Naive thymus-derived CD4-positive, alpha-beta T cell (primary cell): ENCODE measurements at regions of chr13 and their contacts with region 1.

Region 1: DNA sequence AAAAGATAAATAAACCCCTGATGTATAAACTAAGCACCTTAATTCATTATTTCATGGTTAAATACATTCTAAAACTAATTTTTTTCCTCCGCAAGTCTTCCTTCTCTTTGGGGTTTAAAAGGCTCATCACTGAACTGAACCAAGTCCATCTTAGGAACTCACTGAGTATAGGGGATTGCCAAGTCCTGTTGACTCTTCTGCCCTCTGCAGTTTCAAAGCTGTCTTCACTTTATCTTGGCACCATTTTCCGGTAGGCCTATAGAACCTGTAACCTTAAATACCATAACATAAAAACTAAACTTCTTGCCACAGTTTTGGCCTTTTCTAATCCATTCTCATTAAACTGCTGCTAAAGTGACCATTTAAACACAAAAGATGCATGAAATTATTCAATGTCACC is 66.5 kb upstream of the USPL1 start:
- DNase-seq: peak in 7 of 9 donors; percentile 22 to 63 (median 44)
- ATAC-seq: peak; percentile 82
- H3K4me3 ChIP-seq: no peak overlapping the region
- H3K4me3 Mint-ChIP-seq: no peak overlapping the region
- H3K27ac ChIP-seq: no peak overlapping the region
- H3K27ac Mint-ChIP-seq: peak overlapping the region in 1 of 9 donors; percentile 26
- H3K4me1 ChIP-seq: no peaks in the 10 kb centered on the region
- H3K4me1 Mint-ChIP-seq: peaks cover 0 to 6% (median 2%) of the 10 kb centered on the region in 7 donors
- H3K27me3 ChIP-seq: no peaks in the 10 kb centered on the region
- H3K27me3 Mint-ChIP-seq: peaks cover 0 to 11% (median 0%) of the 10 kb centered on the region in 5 donors

Region 2: GRCh38 chr13:29508130-29508875 is 1042.9 kb before region 1 on chr13:
- CTCF ChIA-PET with region 1: no interaction called
- POLR2A ChIA-PET with region 1: no interaction called
- intact Hi-C with region 1: loop called in 1 of 2 experiments (anchors 2 kb)
- DNase-seq: peak; percentile 32 to 74 (median 61)
- ATAC-seq: peak; percentile 76
- H3K4me3 ChIP-seq: no peak overlapping the region
- H3K4me3 Mint-ChIP-seq: no peak overlapping the region
- H3K27ac ChIP-seq: no peak overlapping the region
- H3K27ac Mint-ChIP-seq: peak overlapping the region in 1 of 9 donors; percentile 21
- H3K4me1 ChIP-seq: no peaks in the 10 kb centered on the region
- H3K4me1 Mint-ChIP-seq: peaks cover 0 to 2% (median under 1%) of the 10 kb centered on the region in 7 donors
- H3K27me3 ChIP-seq: no peaks in the 10 kb centered on the region
- H3K27me3 Mint-ChIP-seq: peaks cover 3 to 6% (median 5%) of the 10 kb centered on the region in 5 donors

Region 3: DNA sequence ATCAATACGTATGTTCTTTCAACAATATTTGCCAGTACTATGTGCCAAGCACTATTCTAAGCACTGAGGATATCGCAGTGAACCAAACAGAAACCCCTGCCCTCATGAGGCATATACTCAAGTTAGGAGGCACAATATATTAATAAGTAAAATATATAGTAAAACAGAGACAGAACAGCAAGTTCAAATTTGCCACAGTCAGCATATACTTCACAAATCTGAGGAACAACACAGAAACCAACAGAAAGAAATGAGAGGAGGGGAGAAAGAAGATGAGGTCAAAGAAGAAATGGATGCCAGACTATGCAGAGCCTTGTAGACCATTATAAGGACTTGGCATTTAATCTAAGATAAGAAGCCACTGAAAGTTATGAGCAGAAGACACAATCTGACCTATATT is 303.8 kb before region 1 on chr13:
- CTCF ChIA-PET with region 1: no interaction called
- POLR2A ChIA-PET with region 1: no interaction called
- intact Hi-C with region 1: no loop called
- DNase-seq: no peak
- ATAC-seq: no peak
- H3K4me3 ChIP-seq: no peak overlapping the region
- H3K4me3 Mint-ChIP-seq: no peak overlapping the region
- H3K27ac ChIP-seq: no peak overlapping the region
- H3K27ac Mint-ChIP-seq: no peak overlapping the region
- H3K4me1 ChIP-seq: no peaks in the 10 kb centered on the region
- H3K4me1 Mint-ChIP-seq: peaks cover 0 to 3% (median 0%) of the 10 kb centered on the region in 7 donors
- H3K27me3 ChIP-seq: no peaks in the 10 kb centered on the region
- H3K27me3 Mint-ChIP-seq: no peaks in the 10 kb centered on the region

Region 4: GRCh38 chr13:30257468-30258099 is 293.6 kb before region 1 on chr13:
- CTCF ChIA-PET with region 1: no interaction called
- POLR2A ChIA-PET with region 1: no interaction called
- intact Hi-C with region 1: loop called in 1 of 2 experiments (anchors 1 kb)
- DNase-seq: no peak
- ATAC-seq: no peak
- H3K4me3 ChIP-seq: no peak overlapping the region
- H3K4me3 Mint-ChIP-seq: no peak overlapping the region
- H3K27ac ChIP-seq: no peak overlapping the region
- H3K27ac Mint-ChIP-seq: peak overlapping the region in 2 of 9 donors; percentile 18 to 62
- H3K4me1 ChIP-seq: no peaks in the 10 kb centered on the region
- H3K4me1 Mint-ChIP-seq: peaks cover 0 to 21% (median 14%) of the 10 kb centered on the region in 7 donors
- H3K27me3 ChIP-seq: no peaks in the 10 kb centered on the region
- H3K27me3 Mint-ChIP-seq: no peaks in the 10 kb centered on the region

Region 5: GRCh38 chr13:30355384-30355699 is 195.8 kb before region 1 on chr13:
- CTCF ChIA-PET with region 1: no interaction called
- POLR2A ChIA-PET with region 1: no interaction called
- intact Hi-C with region 1: loop called in 1 of 2 experiments (anchors 1 kb)
- DNase-seq: peak in 3 of 9 donors; percentile 26 to 40 (median 28)
- ATAC-seq: peak; percentile 84
- H3K4me3 ChIP-seq: no peak overlapping the region
- H3K4me3 Mint-ChIP-seq: peak overlapping the region in 7 of 10 donors; percentile 14 to 61 (median 32)
- H3K27ac ChIP-seq: no peak overlapping the region
- H3K27ac Mint-ChIP-seq: peak overlapping the region in 3 of 9 donors; percentile 8 to 75 (median 39)
- H3K4me1 ChIP-seq: peaks cover 0 to 4% of the 10 kb centered on the region in 2 donors
- H3K4me1 Mint-ChIP-seq: peaks cover 10 to 40% (median 35%) of the 10 kb centered on the region in 7 donors
- H3K27me3 ChIP-seq: no peaks in the 10 kb centered on the region
- H3K27me3 Mint-ChIP-seq: no peaks in the 10 kb centered on the region

Region 6: DNA sequence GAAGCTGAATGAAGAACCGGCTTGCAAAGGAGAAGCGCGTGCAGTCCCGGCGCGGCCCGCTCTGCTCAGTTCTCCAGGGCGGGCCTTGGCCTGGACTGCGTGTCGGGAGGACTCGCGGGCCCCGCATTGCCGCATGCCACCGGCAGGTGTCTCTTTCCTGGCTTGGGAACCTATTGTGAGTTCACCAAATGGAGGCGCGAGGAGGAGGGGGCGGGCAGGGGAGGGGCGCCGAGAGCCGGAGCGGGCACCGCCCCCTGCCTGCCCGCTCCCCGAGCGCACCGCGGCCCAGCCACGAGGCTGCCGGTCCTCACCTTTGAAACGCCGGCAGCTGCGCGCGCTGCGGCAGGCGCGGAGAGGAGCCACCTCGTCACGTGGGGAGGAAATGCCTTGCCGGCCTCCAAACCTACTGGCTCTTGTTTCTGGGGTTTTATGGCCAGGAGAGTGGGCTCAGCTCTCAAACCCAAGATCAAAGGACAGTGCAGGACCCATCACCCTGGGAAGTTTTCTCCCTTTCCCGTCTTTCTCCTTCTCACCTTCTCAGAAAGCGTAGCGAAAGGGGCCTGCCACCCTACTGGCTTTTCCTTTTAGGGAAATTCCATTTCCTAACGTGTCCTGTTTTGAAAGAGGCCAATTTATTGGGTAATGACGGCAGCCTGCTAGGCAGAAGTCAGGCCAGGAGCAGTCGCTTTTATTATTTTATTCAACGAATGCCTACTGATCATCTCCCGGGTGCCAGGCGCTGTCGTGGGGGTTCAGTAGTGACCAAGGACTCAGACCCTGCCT is 142.7 kb before region 1 on chr13:
- CTCF ChIA-PET with region 1: no interaction called
- POLR2A ChIA-PET with region 1: no interaction called
- intact Hi-C with region 1: loop called in 1 of 2 experiments (anchors 1 kb)
- DNase-seq: peak; percentile 78 to 89 (median 85)
- ATAC-seq: peak; percentile 97
- H3K4me3 ChIP-seq: peak overlapping the region; percentile 44
- H3K4me3 Mint-ChIP-seq: peak overlapping the region; percentile 64 to 78 (median 72)
- H3K27ac ChIP-seq: peak overlapping the region; percentile 52
- H3K27ac Mint-ChIP-seq: peak overlapping the region; percentile 51 to 87 (median 83)
- H3K4me1 ChIP-seq: peaks cover 9 to 14% of the 10 kb centered on the region in 2 donors
- H3K4me1 Mint-ChIP-seq: peaks cover 6 to 46% (median 37%) of the 10 kb centered on the region in 7 donors
- H3K27me3 ChIP-seq: no peaks in the 10 kb centered on the region
- H3K27me3 Mint-ChIP-seq: peaks cover 0 to 12% (median 0%) of the 10 kb centered on the region in 5 donors

Region 7: DNA sequence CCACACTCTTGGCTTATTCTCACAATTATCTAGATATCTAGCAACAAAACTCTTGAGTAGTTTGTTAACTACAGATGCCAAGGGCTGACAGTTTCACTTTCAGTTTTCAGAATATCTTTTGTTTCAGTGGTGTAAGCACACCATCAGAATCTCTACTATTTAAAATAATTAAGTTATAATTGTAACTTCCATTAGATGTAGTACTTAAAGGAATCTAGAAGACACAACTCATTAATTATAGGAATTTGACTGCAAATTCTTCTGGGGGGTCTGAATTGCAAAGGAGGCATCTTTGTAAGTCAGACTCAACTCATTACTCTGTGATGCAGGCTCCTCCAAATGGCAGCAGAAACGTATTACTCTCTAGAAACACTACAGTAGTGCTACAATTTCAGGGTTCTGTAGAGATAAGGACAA is 21.7 kb after region 1 on chr13:
- CTCF ChIA-PET with region 1: no interaction called
- POLR2A ChIA-PET with region 1: no interaction called
- intact Hi-C with region 1: loop called in 1 of 2 experiments (anchors 2 kb)
- DNase-seq: peak in 7 of 9 donors; percentile 19 to 65 (median 49)
- ATAC-seq: peak; percentile 69
- H3K4me3 ChIP-seq: peak overlapping the region; percentile 55
- H3K4me3 Mint-ChIP-seq: peak overlapping the region; percentile 66 to 88 (median 81)
- H3K27ac ChIP-seq: peak overlapping the region; percentile 81
- H3K27ac Mint-ChIP-seq: peak overlapping the region; percentile 88 to 97 (median 94)
- H3K4me1 ChIP-seq: peaks cover 13 to 24% of the 10 kb centered on the region in 2 donors
- H3K4me1 Mint-ChIP-seq: peaks cover 14 to 42% (median 36%) of the 10 kb centered on the region in 7 donors
- H3K27me3 ChIP-seq: no peaks in the 10 kb centered on the region
- H3K27me3 Mint-ChIP-seq: peaks cover 0 to 3% (median 0%) of the 10 kb centered on the region in 5 donors